Ascending aorta (tissue), 2 donors: ENCODE measurements at regions of chr3 and their contacts with region 1.

Region 1: DNA sequence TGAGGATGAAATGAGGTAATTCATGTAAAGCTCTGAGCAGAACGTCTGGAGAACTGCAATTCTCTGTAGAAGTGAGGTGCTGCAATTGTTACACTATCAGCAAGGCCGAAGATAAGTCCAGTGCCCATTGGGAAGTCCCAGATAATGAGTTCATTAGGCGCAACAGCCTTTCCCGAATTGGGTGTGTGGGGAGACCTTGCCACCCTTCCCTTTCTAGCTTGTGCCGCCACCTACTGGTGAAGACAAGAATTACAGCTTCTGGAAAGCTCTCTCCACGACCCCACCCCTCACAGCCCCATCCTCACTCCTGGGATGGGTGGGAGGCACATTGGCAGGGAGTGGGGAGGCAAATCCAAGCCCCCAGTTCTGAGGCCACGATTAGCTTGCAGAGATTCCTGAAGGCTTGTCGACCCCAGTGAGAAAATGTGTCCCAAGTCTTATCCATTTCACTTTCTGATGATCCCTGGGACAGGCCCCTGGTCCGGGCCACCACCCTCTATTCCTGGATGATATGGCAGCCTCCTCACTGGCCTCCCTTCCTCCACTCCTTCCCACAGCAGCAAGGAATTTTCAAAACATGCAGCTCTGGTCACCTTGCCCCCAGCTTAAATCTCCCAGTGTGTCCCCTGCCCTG is 36.4 kb downstream of the FAM3D start:
- DNase-seq: peak in 1 of 2 donors; percentile 78
- H3K4me3 ChIP-seq: no peak overlapping the region
- H3K27ac ChIP-seq: no peak overlapping the region
- H3K4me1 ChIP-seq: no peaks in the 10 kb centered on the region
- H3K27me3 ChIP-seq: no peaks in the 10 kb centered on the region
- CTCF ChIP-seq: peak; percentile 78 to 92 (median 91)

Region 2: GRCh38 chr3:58568572-58569286 is 61.5 kb before region 1 on chr3:
- intact Hi-C with region 1: loop called (anchors 1 kb)
- DNase-seq: peak in 1 of 2 donors; percentile 85
- H3K4me3 ChIP-seq: no peak overlapping the region
- H3K27ac ChIP-seq: no peak overlapping the region
- H3K4me1 ChIP-seq: no peaks in the 10 kb centered on the region
- H3K27me3 ChIP-seq: no peaks in the 10 kb centered on the region
- CTCF ChIP-seq: peak; percentile 47 to 82 (median 74)